ENCODE measurements at regions of chr6 and their contacts with region 1.

Region 1: GRCh38 chr6:166775180-166776081 is 148.4 kb upstream of the RPS6KA2 start:
- DNase-seq: peak in 6 of 10 donors; percentile 42 to 92 (median 62)

Region 2: GRCh38 chr6:166989427-166990032 is 214.1 kb after region 1 on chr6:
- intact Hi-C with region 1: loop called (anchors 1 kb)
- DNase-seq: peak in 1 of 10 donors; percentile 26

Region 3: DNA sequence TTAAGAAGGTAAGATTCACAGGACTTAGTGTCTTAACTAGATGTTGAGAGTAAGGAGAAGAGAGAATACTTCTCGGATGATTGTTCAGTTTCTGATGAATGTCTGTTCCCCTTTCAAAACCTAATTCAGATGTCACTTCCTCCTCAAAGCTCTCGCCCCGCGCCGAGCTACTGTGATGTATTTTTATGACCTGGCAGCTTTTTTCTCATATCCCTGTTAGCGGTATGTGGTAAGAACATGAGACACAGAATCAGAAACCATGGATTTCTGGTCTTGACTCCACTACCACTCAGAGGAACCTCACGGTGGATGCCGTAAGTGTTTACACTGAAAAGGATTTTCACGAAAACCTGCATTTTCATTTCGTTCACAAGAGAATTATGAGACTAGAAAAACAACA is 272.1 kb after region 1 on chr6:
- intact Hi-C with region 1: no loop called
- DNase-seq: no peak

Region 4: GRCh38 chr6:167141667-167142432 is 366.4 kb after region 1 on chr6:
- intact Hi-C with region 1: loop called (anchors 5 kb)
- DNase-seq: peak in 7 of 10 donors; percentile 27 to 95 (median 59)